ENCODE measurements at regions of chr1 and their contacts with region 1.

Region 1: DNA sequence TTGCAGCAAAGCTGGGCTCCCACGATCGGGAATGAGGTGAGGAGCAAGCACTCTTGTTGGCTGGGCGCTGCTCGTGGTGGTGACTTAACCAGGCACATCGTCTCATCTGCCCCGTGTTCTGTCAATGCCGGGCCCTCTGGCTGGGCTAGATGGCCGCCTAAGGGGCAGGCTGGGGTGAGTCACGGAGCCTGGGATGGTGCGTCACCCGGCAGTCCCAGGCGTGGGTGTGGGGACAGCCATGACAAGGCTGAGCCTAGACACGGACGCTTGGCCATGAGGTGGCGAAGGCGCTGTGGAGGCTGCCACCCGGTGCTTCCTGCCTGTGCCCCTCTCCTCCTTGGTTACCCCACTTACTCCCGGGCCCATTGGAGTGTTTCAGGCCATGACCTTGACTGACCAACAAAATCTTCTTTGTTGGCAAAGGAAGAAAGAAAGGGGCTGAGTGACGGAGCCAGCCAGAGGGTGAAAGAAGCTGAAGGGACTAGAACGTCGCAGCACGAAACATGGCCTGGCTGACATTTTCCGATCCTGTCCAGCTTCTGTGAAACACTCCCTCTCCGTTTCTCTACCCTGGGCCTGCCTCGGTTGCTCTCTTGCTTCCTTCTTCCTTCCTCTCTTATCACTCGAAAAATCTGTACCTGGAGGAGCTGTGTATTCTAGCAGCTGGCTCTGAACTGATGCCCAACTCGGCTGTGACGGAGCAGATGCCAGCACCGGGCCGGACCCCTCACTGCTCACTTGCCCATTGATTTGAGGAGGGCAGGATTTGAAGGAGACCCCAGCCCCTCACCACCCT is 596 bp downstream of the CD247 start:
- DNase-seq: peak; percentile 93
- H3K4me3 Mint-ChIP-seq: peak overlapping the region; percentile 99
- H3K27ac Mint-ChIP-seq: peak overlapping the region; percentile 100
- H3K4me1 Mint-ChIP-seq: peaks cover 39% of the 10 kb centered on the region
- H3K27me3 Mint-ChIP-seq: peaks cover 7% of the 10 kb centered on the region

Region 2: DNA sequence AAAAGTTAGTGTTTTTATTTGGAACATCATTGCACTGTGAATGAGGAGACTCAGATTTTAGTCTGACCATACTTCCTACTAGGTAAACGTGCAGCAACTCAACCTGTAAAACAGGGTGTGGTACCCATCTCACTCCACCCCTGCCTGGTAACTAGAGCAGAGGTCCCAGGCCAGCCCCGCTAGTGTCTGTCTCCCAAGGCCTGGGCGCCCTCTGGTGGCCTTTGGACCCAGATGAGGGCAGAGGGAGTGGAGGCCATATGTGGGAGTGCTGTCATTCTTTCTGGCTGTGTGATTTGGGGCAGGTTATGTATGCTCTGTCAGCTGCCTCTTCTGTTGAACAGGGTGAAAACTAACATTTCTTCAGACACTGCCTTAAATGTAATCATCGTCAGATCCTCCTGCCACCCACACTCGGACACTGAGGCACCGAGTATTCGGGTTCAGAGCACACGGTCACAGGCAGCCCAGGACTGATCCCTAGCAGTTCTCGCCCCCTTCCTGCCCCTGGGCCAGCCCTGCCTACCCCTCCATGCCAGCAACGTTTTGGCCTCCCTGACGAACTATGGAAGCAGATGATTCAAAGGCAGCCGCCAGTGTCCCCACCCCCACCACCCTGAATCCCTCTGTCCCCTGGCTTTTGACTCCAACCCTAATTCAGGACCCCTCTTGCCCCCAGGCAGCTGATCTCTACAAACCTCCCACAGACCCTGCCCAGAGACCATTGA is 75.4 kb before region 1 on chr1:
- intact Hi-C with region 1: loop called (anchors 1 kb)
- DNase-seq: peak; percentile 95
- H3K4me3 Mint-ChIP-seq: peak overlapping the region; percentile 21
- H3K27ac Mint-ChIP-seq: peak overlapping the region; percentile 50
- H3K4me1 Mint-ChIP-seq: peaks cover 73% of the 10 kb centered on the region
- H3K27me3 Mint-ChIP-seq: no peaks in the 10 kb centered on the region

Region 3: GRCh38 chr1:167454894-167455785 is 62.6 kb before region 1 on chr1:
- intact Hi-C with region 1: loop called (anchors 1 kb)
- DNase-seq: peak; percentile 94
- H3K4me3 Mint-ChIP-seq: peak overlapping the region; percentile 86
- H3K27ac Mint-ChIP-seq: peak overlapping the region; percentile 77
- H3K4me1 Mint-ChIP-seq: peaks cover 50% of the 10 kb centered on the region
- H3K27me3 Mint-ChIP-seq: no peaks in the 10 kb centered on the region

Region 4: DNA sequence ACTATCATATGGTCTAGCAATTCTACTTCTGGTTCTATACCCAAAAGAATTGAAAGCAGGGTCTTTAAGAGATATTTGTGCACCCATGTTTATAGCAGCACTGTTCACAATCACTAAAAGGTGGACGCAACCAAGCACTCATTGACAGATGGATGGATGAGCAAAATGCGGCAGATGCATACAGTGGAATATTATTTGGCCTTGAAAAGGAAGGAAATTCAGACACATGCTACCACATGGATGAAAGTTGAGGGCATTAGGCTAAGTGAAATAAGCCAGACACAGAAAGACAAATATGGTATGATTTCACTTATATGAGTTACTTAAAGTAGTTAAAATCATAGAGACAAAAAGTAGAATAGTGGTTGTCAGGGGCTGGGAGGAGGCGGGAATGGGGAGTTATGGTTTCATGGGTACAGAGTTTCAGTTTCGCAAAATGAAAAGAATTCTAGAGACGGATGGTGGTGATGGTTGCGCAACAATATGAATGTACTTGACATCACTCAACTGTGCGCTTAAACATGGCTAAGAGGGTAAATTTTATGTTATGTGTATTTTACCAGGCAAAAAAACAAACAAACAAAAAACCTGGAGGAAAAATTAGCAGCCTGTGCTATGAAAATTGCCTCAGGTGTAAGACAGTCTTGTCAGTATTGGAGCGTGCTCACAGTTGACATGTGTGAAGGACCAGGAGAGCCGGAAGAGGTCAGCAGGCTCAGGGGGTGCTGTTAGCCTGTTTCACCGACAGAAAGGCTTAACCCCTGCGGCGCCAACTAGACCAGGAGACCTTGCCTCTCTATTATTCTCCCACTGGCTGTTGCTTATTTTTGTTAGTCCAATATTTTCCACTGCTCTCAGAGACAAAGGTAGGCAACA is 25.9 kb before region 1 on chr1:
- intact Hi-C with region 1: loop called (anchors 1 kb)
- DNase-seq: peak; percentile 83
- H3K4me3 Mint-ChIP-seq: peak overlapping the region; percentile 79
- H3K27ac Mint-ChIP-seq: peak overlapping the region; percentile 94
- H3K4me1 Mint-ChIP-seq: peaks cover 84% of the 10 kb centered on the region
- H3K27me3 Mint-ChIP-seq: no peaks in the 10 kb centered on the region

Region 5: GRCh38 chr1:167533851-167534300 is 16.1 kb after region 1 on chr1:
- intact Hi-C with region 1: loop called (anchors 2 kb)
- DNase-seq: peak; percentile 89
- H3K4me3 Mint-ChIP-seq: no peak overlapping the region
- H3K27ac Mint-ChIP-seq: no peak overlapping the region
- H3K4me1 Mint-ChIP-seq: peaks cover 7% of the 10 kb centered on the region
- H3K27me3 Mint-ChIP-seq: peaks cover 1% of the 10 kb centered on the region